ENCODE measurements at regions of chr6 and their contacts with region 1.

Region 1: GRCh38 chr6:44642870-44643529 is 255.5 kb downstream of the CDC5L start:
- DNase-seq: peak; percentile 27
- H3K4me3 Mint-ChIP-seq: no peak overlapping the region
- H3K27ac Mint-ChIP-seq: peak overlapping the region; percentile 59
- H3K4me1 Mint-ChIP-seq: peaks cover 25% of the 10 kb centered on the region
- H3K27me3 Mint-ChIP-seq: no peaks in the 10 kb centered on the region

Region 2: GRCh38 chr6:43193939-43194338 is 1449.1 kb before region 1 on chr6:
- CTCF ChIA-PET with region 1: no interaction called
- POLR2A ChIA-PET with region 1: no interaction called
- DNase-seq: no peak
- H3K4me3 Mint-ChIP-seq: no peak overlapping the region
- H3K27ac Mint-ChIP-seq: no peak overlapping the region
- H3K4me1 Mint-ChIP-seq: peaks cover 2% of the 10 kb centered on the region
- H3K27me3 Mint-ChIP-seq: no peaks in the 10 kb centered on the region

Region 3: GRCh38 chr6:44468835-44469234 is 174.2 kb before region 1 on chr6:
- CTCF ChIA-PET with region 1: no interaction called
- POLR2A ChIA-PET with region 1: no interaction called
- DNase-seq: no peak
- H3K4me3 Mint-ChIP-seq: no peak overlapping the region
- H3K27ac Mint-ChIP-seq: no peak overlapping the region
- H3K4me1 Mint-ChIP-seq: no peaks in the 10 kb centered on the region
- H3K27me3 Mint-ChIP-seq: peaks cover 7% of the 10 kb centered on the region

Region 4: GRCh38 chr6:44630125-44631028 is 12.6 kb before region 1 on chr6:
- CTCF ChIA-PET with region 1: interaction called, 11 read pairs
- POLR2A ChIA-PET with region 1: no interaction called
- DNase-seq: peak; percentile 39
- H3K4me3 Mint-ChIP-seq: no peak overlapping the region
- H3K27ac Mint-ChIP-seq: peak overlapping the region; percentile 62
- H3K4me1 Mint-ChIP-seq: peaks cover 24% of the 10 kb centered on the region
- H3K27me3 Mint-ChIP-seq: no peaks in the 10 kb centered on the region

Measured in activated CD4-positive, alpha-beta T cell treated with anti-CD3 and anti-CD28 coated beads, Interleukin-2, amount 10 ng/mL, durations not matched to agents 7 days and 5 days (primary cell).